ENCODE measurements at regions of chr13 and their contacts with region 1.

Region 1: DNA sequence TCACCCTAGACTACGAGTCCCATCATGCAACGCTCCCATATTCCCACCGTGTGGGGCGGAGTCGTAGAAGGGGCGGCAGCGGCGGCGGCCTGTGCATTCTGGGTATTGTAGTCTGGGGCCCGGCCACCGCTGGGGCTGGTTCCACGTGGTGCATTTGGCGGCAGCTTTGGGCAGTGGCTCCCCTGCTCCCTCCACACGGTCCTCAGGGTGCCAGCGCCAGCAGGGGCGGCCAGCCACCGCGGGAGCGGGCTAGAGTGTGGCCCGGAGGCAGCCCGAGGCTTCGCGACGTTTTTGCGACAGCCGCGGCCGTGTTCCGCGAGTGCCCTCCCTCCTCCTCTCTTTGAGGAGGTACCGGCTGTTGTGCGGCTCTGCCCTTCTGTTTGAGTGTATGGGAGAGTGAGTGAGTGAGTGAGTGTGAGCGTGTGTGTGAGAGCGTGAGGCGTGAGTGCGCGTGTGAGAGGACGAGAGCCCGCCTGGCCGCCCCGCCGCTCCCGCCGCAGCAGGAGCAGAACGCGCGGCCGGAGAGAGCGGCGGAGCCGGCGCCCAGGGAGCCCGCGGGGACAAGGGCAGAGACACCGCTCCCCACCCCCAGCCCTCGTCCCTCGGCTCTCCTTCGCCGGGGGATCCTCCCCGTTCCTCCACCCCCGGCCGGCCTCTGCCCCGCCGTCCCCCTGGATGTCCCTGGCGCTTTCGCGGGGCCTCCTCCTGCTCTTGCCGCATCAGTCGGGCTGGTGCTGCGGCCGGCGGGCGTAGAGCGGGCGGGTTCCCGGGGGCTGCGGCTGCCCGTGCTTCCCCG is at the start of gene CDK8:
- DNase-seq: peak; percentile 93
- H3K4me3 ChIP-seq: peak within 1 kb of the TSS; percentile 83
- H3K27ac ChIP-seq: peak within 1 kb of the TSS; percentile 68
- H3K4me1 ChIP-seq: peaks cover 29% of the 10 kb centered on the region
- CTCF ChIP-seq: no peak
- total RNA-seq, gene CDK8: 11.6 and 16.8 TPM in 2 replicates

Region 2: DNA sequence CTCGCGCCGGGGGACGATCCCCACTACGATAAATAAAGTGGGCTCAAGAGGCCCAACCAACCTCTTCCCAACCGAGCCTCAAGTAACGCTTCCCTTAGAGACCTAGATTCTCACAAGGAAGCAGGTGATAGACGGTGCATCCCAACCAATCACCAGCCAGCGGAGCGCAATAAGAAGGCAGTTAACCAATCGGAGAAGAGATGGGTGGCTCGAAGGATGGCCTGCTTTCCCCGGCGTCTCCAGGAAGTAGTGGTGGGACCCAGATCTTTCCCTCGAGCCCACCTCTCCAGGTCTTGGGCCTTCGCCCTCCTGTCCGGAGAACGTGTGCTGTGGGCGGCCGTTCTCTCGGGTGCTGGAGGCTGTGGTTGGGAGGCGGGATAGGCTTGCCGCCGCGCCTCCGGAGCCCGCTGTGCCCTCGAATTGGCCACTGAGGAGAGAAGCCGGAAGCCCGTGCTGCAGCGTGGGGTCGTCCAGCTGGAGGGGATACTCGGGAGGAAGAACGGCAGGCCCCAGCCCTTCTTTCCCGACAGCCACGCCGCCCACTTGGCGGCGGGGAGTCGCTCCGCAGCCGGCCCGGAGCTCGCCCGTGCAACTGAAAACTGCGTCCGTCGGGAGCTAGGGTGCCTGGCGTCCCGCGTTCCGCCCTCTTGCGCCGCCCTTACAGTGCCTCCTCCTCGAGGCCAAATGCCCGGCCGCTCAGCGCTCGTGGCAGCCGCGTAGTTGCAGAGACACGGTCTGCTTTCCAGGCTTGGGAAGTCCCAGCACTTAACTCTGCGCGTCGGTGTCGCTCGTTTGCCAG is 32.1 kb before region 1 on chr13 and contains the start of gene RNF6:
- CTCF ChIA-PET with region 1: no interaction called
- POLR2A ChIA-PET with region 1: interaction called, 4 read pairs
- intact Hi-C with region 1: loop called (anchors 1 kb)
- DNase-seq: peak; percentile 97
- H3K4me3 ChIP-seq: peak within 1 kb of the TSS; percentile 81
- H3K27ac ChIP-seq: peak within 1 kb of the TSS; percentile 86
- H3K4me1 ChIP-seq: peaks cover 23% of the 10 kb centered on the region
- CTCF ChIP-seq: 0 out of 2 replicates have a peak, but pooled peaks have one; percentile 23
- total RNA-seq, gene RNF6: 20.4 and 25.6 TPM in 2 replicates

Region 3: DNA sequence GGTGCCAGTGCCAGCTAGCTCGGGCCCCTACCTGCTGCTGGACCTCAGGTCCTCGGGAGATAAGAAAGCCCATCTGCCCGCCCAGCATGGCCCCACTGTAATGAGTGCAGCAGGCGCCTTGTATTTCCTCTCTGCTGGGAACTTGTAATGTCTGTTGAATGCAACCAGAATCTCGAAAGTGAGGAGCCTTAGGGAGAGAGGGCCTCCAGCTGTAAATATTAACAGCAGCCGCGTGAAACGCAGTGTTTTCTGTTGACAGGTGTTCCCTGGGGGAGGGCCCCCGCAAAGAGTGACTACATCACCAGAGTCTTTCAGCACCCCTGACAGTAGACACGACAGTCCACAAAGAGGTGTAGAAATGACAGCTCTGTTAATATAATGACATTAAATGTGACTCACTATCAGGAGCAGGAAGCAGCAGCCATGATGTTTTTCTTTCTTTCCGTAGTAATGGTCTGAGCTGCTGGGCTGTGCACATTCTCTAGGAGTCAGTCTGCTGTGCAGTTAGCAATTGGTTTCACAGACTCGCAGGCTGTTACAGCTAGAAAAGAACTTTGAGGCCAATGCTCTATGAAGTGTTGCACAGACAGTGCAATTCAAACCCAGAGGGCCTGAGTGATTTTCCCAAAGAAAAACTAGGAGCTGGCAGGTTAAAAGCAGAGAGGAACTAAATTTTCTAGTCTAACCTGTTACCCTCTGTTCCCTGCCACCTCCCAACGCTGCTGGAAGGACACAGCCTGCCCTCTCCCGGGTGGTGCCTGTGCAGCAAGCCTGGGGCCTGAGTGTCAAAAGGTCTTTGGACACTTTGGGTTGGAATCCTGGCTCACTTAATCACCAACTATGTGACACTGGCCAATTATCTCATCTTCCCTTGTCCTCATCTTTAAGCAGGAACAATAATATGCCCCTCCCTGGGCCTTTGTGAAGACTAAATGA is 244.9 kb after region 1 on chr13:
- CTCF ChIA-PET with region 1: no interaction called
- POLR2A ChIA-PET with region 1: no interaction called
- intact Hi-C with region 1: loop called (anchors 10 kb)
- DNase-seq: no peak
- H3K4me3 ChIP-seq: no peak overlapping the region
- H3K27ac ChIP-seq: no peak overlapping the region
- H3K4me1 ChIP-seq: no peaks in the 10 kb centered on the region
- CTCF ChIP-seq: no peak